Activated naive CD4-positive, alpha-beta T cell treated with anti-CD3 and anti-CD28 coated beads for 36 hours (primary cell): ENCODE measurements at regions of chr12 and their contacts with region 1.

Region 1: DNA sequence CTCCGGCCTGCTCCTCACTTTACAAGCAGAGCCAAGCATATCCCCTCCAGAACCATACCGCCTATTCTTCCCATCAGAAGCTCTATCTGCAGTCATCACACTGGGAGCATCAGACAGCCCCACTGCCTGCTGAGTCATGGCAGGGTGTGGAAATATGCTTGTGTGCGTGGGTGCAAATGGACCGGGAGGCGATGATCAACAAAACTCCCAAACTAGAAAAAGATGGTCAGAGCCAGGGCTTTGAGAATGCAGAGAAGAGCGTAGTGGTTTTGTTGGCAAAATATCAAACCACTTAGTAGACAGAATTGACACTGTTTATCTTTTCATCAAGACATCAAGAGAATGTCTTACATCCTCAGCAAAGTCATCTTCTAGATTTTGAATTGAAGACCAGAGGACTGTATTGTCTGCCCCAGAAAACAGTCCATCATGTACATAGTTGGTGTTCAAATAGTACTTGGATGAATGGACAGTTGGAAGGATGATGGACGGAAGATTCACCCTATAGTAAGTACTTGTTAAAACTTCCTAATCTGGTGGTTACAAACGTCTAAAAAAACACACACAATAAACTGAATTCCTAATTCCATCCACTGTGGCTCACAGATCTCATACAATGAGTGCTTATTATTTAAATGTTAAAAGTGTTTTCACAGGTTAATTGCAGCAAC is 54.9 kb downstream of the VWF start:
- DNase-seq: peak; percentile 31
- H3K4me3 Mint-ChIP-seq: no peak overlapping the region
- H3K27ac Mint-ChIP-seq: no peak overlapping the region
- H3K4me1 Mint-ChIP-seq: peaks cover 17% of the 10 kb centered on the region
- H3K27me3 Mint-ChIP-seq: no peaks in the 10 kb centered on the region

Region 2: GRCh38 chr12:6047249-6048237 is 22.0 kb before region 1 on chr12:
- CTCF ChIA-PET with region 1: no interaction called
- intact Hi-C with region 1: no loop called
- DNase-seq: no peak
- H3K4me3 Mint-ChIP-seq: no peak overlapping the region
- H3K27ac Mint-ChIP-seq: no peak overlapping the region
- H3K4me1 Mint-ChIP-seq: peaks cover 3% of the 10 kb centered on the region
- H3K27me3 Mint-ChIP-seq: no peaks in the 10 kb centered on the region

Region 3: GRCh38 chr12:6140651-6141447 is 71.3 kb after region 1 on chr12:
- CTCF ChIA-PET with region 1: no interaction called
- intact Hi-C with region 1: loop called (anchors 5 kb)
- DNase-seq: peak; percentile 63
- H3K4me3 Mint-ChIP-seq: peak overlapping the region; percentile 47
- H3K27ac Mint-ChIP-seq: peak overlapping the region; percentile 94
- H3K4me1 Mint-ChIP-seq: peaks cover 48% of the 10 kb centered on the region
- H3K27me3 Mint-ChIP-seq: no peaks in the 10 kb centered on the region